ENCODE measurements at regions of chr4 and their contacts with region 1.

Region 1: GRCh38 chr4:36278789-36279188 is 2.6 kb upstream of the DTHD1 start:
- DNase-seq: no peak
- H3K4me3 ChIP-seq: no peak overlapping the region
- H3K27ac ChIP-seq: no peak overlapping the region
- H3K4me1 ChIP-seq: no peaks in the 10 kb centered on the region
- H3K27me3 ChIP-seq: no peaks in the 10 kb centered on the region
- CTCF ChIP-seq: no peak
- POLR2A ChIP-seq: no peak

Region 2: DNA sequence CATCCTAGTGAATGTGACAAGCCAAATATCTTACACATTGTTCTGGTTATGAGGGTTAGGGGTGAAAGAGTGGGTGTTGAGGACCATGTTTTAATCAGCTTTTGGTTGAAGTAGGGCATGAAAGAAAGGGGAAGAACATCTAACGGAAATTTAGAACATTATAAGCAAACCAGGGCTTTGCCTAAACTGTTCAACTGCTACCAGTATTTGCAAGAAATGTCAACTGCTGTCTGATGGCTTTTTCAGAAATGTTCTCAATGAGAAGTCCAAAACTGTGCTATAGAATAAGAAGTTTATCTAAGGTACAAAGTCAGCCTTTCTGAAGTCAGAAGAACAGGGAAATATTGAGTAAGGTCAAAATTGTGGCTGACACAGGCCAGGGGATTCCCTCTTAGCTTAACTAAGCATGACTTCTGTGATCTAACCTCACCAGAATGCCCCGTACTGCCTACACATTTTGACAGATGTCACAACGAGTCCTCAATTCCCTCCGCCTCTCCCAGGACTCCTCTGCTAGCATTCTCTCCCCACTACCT is 69.7 kb after region 1 on chr4:
- intact Hi-C with region 1: loop called (anchors 2 kb)
- DNase-seq: no peak
- H3K4me3 ChIP-seq: no peak overlapping the region
- H3K27ac ChIP-seq: no peak overlapping the region
- H3K4me1 ChIP-seq: no peaks in the 10 kb centered on the region
- H3K27me3 ChIP-seq: no peaks in the 10 kb centered on the region
- CTCF ChIP-seq: no peak
- POLR2A ChIP-seq: no peak